Mammary epithelial cell (primary cell): ENCODE measurements at regions of chr7 and their contacts with region 1.

Region 1: GRCh38 chr7:107563775-107564552 is at the starts of genes COG5 and DUS4L:
- DNase-seq: peak; percentile 83
- H3K4me3 ChIP-seq: peak within 1 kb of the TSS; percentile 65 to 98 (median 84)
- H3K27ac ChIP-seq: peak within 1 kb of the TSS; percentile 98
- H3K4me1 ChIP-seq: peaks cover 41% of the 10 kb centered on the region
- H3K27me3 ChIP-seq: no peaks in the 10 kb centered on the region
- CTCF ChIP-seq: no peak
- total RNA-seq, gene COG5: 60.5 to 66.2 TPM
- total RNA-seq, gene DUS4L: 13.0 to 19.0 TPM

Region 2: DNA sequence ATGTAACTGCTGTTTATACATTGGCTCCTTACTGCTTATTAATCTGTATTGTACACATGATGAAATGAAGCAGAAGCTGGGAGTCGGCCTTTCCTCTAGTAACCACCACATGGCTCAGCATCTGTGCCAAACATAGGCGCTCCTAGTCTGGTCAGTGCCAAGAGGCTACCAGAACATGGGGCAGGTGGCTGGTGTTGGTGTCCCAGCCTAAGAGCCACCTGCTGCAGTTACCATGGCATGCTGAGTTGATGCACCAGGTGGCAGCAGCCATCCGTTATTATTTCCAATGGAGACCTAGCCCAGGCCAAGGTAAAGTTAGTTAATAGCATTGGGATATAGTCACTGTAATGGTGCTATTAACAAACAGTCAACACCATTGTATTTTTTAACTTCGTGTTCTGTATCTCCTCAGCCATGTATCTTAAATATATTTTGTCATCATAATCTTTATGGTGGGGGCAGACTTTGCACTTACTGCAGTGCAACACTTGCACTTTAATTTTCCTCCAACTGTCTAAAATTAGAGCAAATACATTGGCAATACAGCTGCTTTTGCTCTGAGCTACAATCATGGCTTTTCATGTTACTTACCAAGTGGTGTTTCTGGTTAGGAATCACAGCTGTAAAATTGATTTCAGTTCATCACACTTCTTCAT is 362.0 kb before region 1 on chr7:
- CTCF ChIA-PET with region 1: no interaction called
- dilution Hi-C with region 1: no loop called
- in situ Hi-C with region 1: no loop called
- intact Hi-C with region 1: loop called (anchors 5 kb)
- DNase-seq: peak; percentile 37
- H3K4me3 ChIP-seq: no peak overlapping the region
- H3K27ac ChIP-seq: no peak overlapping the region
- H3K4me1 ChIP-seq: no peaks in the 10 kb centered on the region
- H3K27me3 ChIP-seq: no peaks in the 10 kb centered on the region
- CTCF ChIP-seq: peak; percentile 69 to 71

Region 3: DNA sequence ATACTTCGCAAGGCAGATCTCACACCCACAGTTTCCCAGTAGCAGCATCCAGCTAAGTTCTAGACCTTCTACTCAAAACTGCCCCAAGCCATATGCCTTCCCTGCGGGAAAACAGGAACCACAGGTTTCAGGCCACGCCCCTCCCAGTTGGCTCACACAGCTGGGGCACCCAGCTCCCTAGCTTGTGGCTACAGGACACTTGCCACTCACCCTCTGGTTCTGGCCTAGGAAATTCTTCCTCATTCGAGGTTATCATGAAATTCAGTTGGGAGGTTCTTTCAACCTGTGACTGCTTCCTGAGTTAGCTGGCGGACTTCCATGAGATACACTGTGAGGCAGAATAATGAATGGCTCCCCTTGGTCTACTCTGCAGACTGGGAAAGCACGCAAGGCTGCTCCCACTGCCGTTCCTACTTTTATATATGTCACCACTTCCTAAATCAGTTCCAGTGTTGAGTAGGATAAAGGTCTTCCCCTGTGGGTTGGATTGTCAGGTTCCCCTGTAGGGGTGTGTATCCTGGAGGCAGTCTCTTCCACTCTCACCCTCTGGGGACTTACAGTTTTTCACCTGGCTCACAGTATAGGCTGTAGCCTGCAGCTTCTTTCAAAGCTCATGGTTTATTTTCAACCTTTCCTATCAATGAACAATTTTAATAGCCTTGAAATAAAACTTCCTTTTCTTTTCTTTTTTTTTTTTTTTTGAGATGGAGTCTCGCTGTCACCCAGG is 57.2 kb before region 1 on chr7:
- CTCF ChIA-PET with region 1: no interaction called
- dilution Hi-C with region 1: no loop called
- in situ Hi-C with region 1: no loop called
- intact Hi-C with region 1: loop called (anchors 5 kb)
- DNase-seq: peak; percentile 91
- H3K4me3 ChIP-seq: no peak overlapping the region
- H3K27ac ChIP-seq: peak overlapping the region; percentile 25
- H3K4me1 ChIP-seq: peaks cover 20% of the 10 kb centered on the region
- H3K27me3 ChIP-seq: no peaks in the 10 kb centered on the region
- CTCF ChIP-seq: no peak

Region 4: DNA sequence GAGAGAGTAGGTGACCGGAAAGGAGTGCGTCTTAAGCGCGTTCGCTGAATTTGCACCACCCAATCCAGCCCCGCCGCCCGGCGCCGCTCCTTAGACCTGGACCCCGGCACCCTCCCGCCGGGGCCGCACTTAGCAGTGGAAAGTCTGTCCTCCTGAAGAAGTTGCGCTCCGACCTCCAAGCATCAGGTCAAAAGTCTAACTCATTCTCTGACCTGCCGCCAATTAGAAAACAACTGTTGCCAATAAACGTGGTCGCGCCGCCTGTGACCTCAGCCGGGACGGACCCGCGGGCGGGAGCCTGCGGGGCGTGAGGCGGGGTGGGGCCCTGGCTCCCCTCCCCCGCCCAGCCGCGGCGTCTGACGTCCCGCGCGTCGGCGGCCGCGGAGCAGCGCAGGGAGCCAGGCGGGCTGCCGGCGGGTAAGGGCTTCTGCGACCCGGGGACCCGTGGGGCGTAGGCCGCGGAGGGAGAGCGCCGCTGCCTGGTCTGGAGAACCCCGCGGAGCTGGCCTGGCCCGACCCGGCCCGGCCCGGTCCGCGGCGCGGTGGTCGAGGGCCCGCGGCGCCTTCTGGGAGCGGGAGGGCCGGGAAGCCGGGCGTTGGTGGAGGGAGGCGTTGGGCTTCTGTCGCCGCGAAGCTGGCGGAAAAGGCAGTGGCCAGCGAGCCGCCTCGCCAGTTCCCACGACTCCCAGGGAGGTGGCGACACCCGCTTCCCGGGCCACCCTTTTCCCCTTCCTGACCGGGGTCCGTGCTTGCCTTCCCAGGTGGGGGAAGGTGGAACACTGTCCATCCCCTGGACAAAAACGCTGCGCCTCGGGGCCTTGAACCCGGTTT is 16.1 kb after region 1 on chr7 and contains the start of gene BCAP29:
- CTCF ChIA-PET with region 1: no interaction called
- dilution Hi-C with region 1: no loop called
- in situ Hi-C with region 1: no loop called
- intact Hi-C with region 1: loop called (anchors 2 kb)
- DNase-seq: peak; percentile 65
- H3K4me3 ChIP-seq: peak within 1 kb of the TSS; percentile 68 to 88 (median 82)
- H3K27ac ChIP-seq: peak within 1 kb of the TSS; percentile 75
- H3K4me1 ChIP-seq: peaks cover 9% of the 10 kb centered on the region
- H3K27me3 ChIP-seq: no peaks in the 10 kb centered on the region
- CTCF ChIP-seq: peak in 1 of 2 donors; percentile 38
- total RNA-seq, gene BCAP29: 92.1 to 129 TPM

Region 5: GRCh38 chr7:107594961-107595737 is 31.2 kb after region 1 on chr7:
- CTCF ChIA-PET with region 1: interaction called, 3 read pairs
- dilution Hi-C with region 1: loop called (anchors 5 kb)
- in situ Hi-C with region 1: no loop called
- intact Hi-C with region 1: loop called (anchors 2 kb)
- DNase-seq: peak; percentile 97
- H3K4me3 ChIP-seq: no peak overlapping the region
- H3K27ac ChIP-seq: peak overlapping the region; percentile 82
- H3K4me1 ChIP-seq: peaks cover 42% of the 10 kb centered on the region
- H3K27me3 ChIP-seq: no peaks in the 10 kb centered on the region
- CTCF ChIP-seq: no peak

Region 6: GRCh38 chr7:107879400-107880035 is 315.6 kb after region 1 on chr7:
- CTCF ChIA-PET with region 1: no interaction called
- dilution Hi-C with region 1: no loop called
- in situ Hi-C with region 1: no loop called
- intact Hi-C with region 1: no loop called
- DNase-seq: peak; percentile 55
- H3K4me3 ChIP-seq: no peak overlapping the region
- H3K27ac ChIP-seq: no peak overlapping the region
- H3K4me1 ChIP-seq: peaks cover 6% of the 10 kb centered on the region
- H3K27me3 ChIP-seq: no peaks in the 10 kb centered on the region
- CTCF ChIP-seq: peak; percentile 82 to 90